ENCODE measurements at regions of chr9 and their contacts with region 1.

Region 1: GRCh38 chr9:28735738-28736342 is 1162.6 kb upstream of the C9orf72 start:
- DNase-seq: no peak
- ATAC-seq: no peak
- H3K4me3 ChIP-seq: no peak overlapping the region
- H3K27ac ChIP-seq: no peak overlapping the region
- H3K4me1 ChIP-seq: no peaks in the 10 kb centered on the region
- H3K27me3 ChIP-seq: no peaks in the 10 kb centered on the region
- CTCF ChIP-seq: no peak
- POLR2A ChIP-seq: no peak
- RAD21 ChIP-seq: no peak

Region 2: DNA sequence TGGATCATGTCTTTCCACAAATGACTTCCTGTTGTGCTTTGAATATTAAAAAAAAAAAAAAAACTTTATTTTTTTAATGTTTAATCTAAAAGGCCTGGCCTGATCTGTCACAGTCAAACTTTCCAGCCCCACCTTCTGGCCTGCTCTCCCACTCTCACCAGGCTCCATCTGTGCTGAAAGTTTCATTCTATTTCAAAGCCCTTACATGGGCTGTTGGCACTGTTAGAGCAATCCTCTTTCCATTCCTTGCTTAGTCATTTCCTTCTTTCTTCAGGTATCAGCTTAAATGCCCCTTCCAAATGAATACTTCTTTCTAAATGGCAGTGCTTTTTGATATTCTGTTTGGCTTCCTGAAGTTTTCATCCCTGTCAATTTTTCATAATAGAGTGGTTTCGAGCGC is 57.7 kb before region 1 on chr9:
- CTCF ChIA-PET with region 1: no interaction called
- POLR2A ChIA-PET with region 1: no interaction called
- RAD21 ChIA-PET with region 1: no interaction called
- intact Hi-C with region 1: loop called (anchors 10 kb)
- DNase-seq: no peak
- ATAC-seq: no peak
- H3K4me3 ChIP-seq: no peak overlapping the region
- H3K27ac ChIP-seq: no peak overlapping the region
- H3K4me1 ChIP-seq: no peaks in the 10 kb centered on the region
- H3K27me3 ChIP-seq: no peaks in the 10 kb centered on the region
- CTCF ChIP-seq: no peak
- POLR2A ChIP-seq: no peak
- RAD21 ChIP-seq: no peak